ENCODE measurements at regions of chr5 and their contacts with region 1.

Region 1: GRCh38 chr5:97979740-97980139 is 793.7 kb upstream of the RGMB start:
- DNase-seq: peak; percentile 77
- ATAC-seq: peak; percentile 62
- H3K4me3 ChIP-seq: no peak overlapping the region
- H3K27ac ChIP-seq: peak overlapping the region; percentile 68; the same call in 1 of the 2 replicates
- H3K4me1 ChIP-seq: no peaks in the 10 kb centered on the region
- H3K27me3 ChIP-seq: no peaks in the 10 kb centered on the region
- CTCF ChIP-seq: no peak
- POLR2A ChIP-seq: no peak
- RAD21 ChIP-seq: no peak

Region 2: DNA sequence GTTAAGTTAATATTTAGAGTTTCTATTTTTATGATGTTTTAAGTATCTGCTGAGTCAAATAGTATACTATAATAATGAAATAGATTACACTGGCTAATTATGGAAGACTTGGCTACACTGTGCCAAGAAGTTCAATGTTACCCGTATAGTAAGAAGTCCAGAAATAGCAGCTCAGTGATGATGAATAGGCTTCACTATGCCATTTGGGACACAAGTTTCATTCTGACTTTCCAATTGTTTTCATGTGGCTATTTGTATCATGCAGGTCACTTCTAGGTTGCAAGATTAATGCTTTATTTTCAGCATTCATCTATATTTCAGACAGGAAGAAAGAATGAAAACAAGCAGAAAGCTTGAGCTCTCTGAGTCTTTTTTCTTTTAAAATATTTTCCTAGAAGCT is 602.2 kb before region 1 on chr5:
- CTCF ChIA-PET with region 1: no interaction called
- POLR2A ChIA-PET with region 1: no interaction called
- dilution Hi-C with region 1: no loop called
- in situ Hi-C with region 1: no loop called
- intact Hi-C with region 1: loop called (anchors 10 kb)
- DNase-seq: no peak
- ATAC-seq: no peak
- H3K4me3 ChIP-seq: no peak overlapping the region
- H3K27ac ChIP-seq: no peak overlapping the region
- H3K4me1 ChIP-seq: no peaks in the 10 kb centered on the region
- H3K27me3 ChIP-seq: no peaks in the 10 kb centered on the region
- CTCF ChIP-seq: no peak
- POLR2A ChIP-seq: no peak
- RAD21 ChIP-seq: no peak

Measured in IMR-90 (cell line).